Naive thymus-derived CD8-positive, alpha-beta T cell (primary cell): ENCODE measurements at regions of chr22 and their contacts with region 1.

Region 1: GRCh38 chr22:46762238-46763050 is at the start of gene TBC1D22A:
- DNase-seq: peak; percentile 90 to 96 (median 94)
- ATAC-seq: peak; percentile 87 to 94
- H3K4me3 Mint-ChIP-seq: peak within 1 kb of the TSS; percentile 95 to 100 (median 98)
- H3K27ac Mint-ChIP-seq: peak within 1 kb of the TSS; percentile 98 to 100 (median 100)
- H3K4me1 Mint-ChIP-seq: peaks cover 39 to 71% (median 66%) of the 10 kb centered on the region in 4 donors
- H3K27me3 Mint-ChIP-seq: no peaks in the 10 kb centered on the region
- polyA plus RNA-seq, gene TBC1D22A: 23.0 to 24.6 (median 23.3) TPM

Region 2: DNA sequence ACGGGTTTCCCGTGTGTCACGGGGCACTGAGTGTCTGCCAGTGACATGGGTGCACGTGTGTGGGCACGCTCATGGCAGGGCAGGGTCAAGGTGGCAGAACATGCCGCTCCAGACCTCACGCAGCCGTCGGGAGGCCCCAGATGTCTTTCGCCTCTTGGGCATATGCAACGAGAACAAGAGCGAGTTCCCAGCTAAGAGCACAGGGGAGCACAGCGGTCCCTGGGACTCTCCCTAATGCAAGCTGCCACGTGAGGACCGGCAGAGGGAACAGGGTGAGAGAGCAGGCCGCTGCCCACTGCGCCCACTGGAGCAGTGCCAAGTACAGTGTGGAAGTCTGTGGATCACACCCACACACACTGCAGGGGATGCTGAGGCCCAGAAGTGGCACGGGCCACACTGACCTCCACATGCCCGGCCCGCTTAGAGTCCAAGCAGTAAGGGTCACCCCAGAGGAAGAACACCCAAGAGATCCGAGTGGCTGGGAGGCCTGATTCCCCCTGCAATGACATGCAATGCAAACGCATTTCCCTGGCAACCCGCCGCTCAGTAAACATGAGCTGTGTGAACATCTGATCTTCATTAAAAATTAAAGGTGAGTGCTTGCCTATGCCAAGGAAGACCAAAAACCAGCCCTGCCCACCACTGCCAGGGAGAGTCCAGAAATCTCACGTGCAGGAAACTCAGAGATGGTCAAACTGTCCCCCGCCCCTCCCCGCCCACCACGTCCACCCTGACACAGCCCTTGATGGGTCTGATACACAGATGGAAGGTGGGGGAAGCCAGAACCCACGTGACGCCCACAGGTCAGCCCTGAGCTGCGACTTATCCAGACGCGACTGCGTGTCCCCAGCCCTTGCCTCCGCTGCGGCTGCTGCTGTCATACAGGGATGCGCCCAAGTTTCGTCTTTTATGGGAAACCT is 36.1 kb before region 1 on chr22:
- POLR2A ChIA-PET with region 1: interaction called, 78 read pairs
- DNase-seq: no peak
- ATAC-seq: no peak
- H3K4me3 Mint-ChIP-seq: no peak overlapping the region
- H3K27ac Mint-ChIP-seq: peak overlapping the region in 2 of 10 donors; percentile 25 to 53
- H3K4me1 Mint-ChIP-seq: peaks cover 21 to 78% (median 41%) of the 10 kb centered on the region in 4 donors
- H3K27me3 Mint-ChIP-seq: no peaks in the 10 kb centered on the region

Region 3: GRCh38 chr22:46748908-46749675 is 13.4 kb before region 1 on chr22:
- POLR2A ChIA-PET with region 1: interaction called, 151 read pairs
- DNase-seq: peak; percentile 28 to 85 (median 65)
- ATAC-seq: peak; percentile 96 to 98
- H3K4me3 Mint-ChIP-seq: peak overlapping the region; percentile 64 to 90 (median 82)
- H3K27ac Mint-ChIP-seq: peak overlapping the region; percentile 92 to 99 (median 96)
- H3K4me1 Mint-ChIP-seq: peaks cover 17 to 35% (median 30%) of the 10 kb centered on the region in 4 donors
- H3K27me3 Mint-ChIP-seq: peaks cover 0 to 2% (median 0%) of the 10 kb centered on the region in 5 donors

Region 4: DNA sequence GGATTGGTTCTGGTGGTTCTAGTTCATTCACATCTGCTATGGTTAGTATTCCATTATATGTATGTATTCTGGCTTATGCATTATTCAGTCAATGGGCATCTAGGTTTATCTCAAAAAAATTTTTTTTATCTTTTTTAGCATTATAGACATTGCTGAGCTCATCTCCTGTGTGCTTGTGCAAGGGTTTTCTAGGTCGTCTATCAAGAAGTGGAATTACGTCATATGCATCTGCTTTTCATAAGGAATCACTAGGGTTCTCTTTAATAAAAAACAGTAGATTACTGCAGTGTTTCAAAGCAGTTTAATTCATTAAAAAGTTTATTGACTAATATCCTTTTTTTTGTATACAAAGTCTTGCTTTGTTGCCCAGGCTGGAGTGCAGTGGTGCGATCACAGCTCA is 21.3 kb after region 1 on chr22:
- POLR2A ChIA-PET with region 1: interaction called, 13 read pairs
- DNase-seq: no peak
- ATAC-seq: no peak
- H3K4me3 Mint-ChIP-seq: no peak overlapping the region
- H3K27ac Mint-ChIP-seq: peak overlapping the region in 3 of 10 donors; percentile 32 to 68 (median 45)
- H3K4me1 Mint-ChIP-seq: peaks cover 22 to 79% (median 46%) of the 10 kb centered on the region in 4 donors
- H3K27me3 Mint-ChIP-seq: no peaks in the 10 kb centered on the region

Region 5: GRCh38 chr22:46803031-46803880 is 40.8 kb after region 1 on chr22:
- POLR2A ChIA-PET with region 1: interaction called, 77 read pairs
- DNase-seq: peak; percentile 66 to 85 (median 73)
- ATAC-seq: peak; percentile 85 to 89
- H3K4me3 Mint-ChIP-seq: peak overlapping the region in 6 of 10 donors; percentile 13 to 59 (median 46)
- H3K27ac Mint-ChIP-seq: peak overlapping the region; percentile 66 to 93 (median 82)
- H3K4me1 Mint-ChIP-seq: peaks cover 27 to 67% (median 62%) of the 10 kb centered on the region in 4 donors
- H3K27me3 Mint-ChIP-seq: no peaks in the 10 kb centered on the region

Region 6: GRCh38 chr22:47290706-47291430 is 528.4 kb after region 1 on chr22:
- POLR2A ChIA-PET with region 1: no interaction called
- DNase-seq: peak in 1 of 10 donors; percentile 18
- ATAC-seq: no peak
- H3K4me3 Mint-ChIP-seq: no peak overlapping the region
- H3K27ac Mint-ChIP-seq: no peak overlapping the region
- H3K4me1 Mint-ChIP-seq: no peaks in the 10 kb centered on the region
- H3K27me3 Mint-ChIP-seq: peaks cover 0 to 35% (median 13%) of the 10 kb centered on the region in 5 donors